ENCODE measurements at regions of chr3 and their contacts with region 1.

Region 1: GRCh38 chr3:49093853-49094767 is at the start of gene QRICH1:
- DNase-seq: peak; percentile 97
- H3K4me3 ChIP-seq: peak within 1 kb of the TSS; percentile 99
- H3K27ac ChIP-seq: peak within 1 kb of the TSS; percentile 98
- H3K27me3 ChIP-seq: no peaks in the 10 kb centered on the region
- CTCF ChIP-seq: peak; percentile 72
- polyA plus RNA-seq, gene QRICH1: 68.6 and 69.7 TPM in 2 replicates

Region 2: GRCh38 chr3:49007068-49007770 is 86.9 kb before region 1 on chr3 and contains the start of gene WDR6:
- CTCF ChIA-PET with region 1: interaction called, 6 read pairs
- POLR2A ChIA-PET with region 1: interaction called, 26 read pairs
- DNase-seq: peak; percentile 96
- H3K4me3 ChIP-seq: peak within 1 kb of the TSS; percentile 93
- H3K27ac ChIP-seq: peak within 1 kb of the TSS; percentile 98
- H3K27me3 ChIP-seq: no peaks in the 10 kb centered on the region
- CTCF ChIP-seq: peak; percentile 35; the same call in 1 of the 2 replicates
- polyA plus RNA-seq, gene WDR6: 101 and 117 TPM in 2 replicates

Region 3: GRCh38 chr3:49028673-49029562 is 65.2 kb before region 1 on chr3 and contains the start of gene IMPDH2:
- CTCF ChIA-PET with region 1: interaction called, 4 read pairs
- POLR2A ChIA-PET with region 1: interaction called, 36 read pairs
- DNase-seq: peak; percentile 81
- H3K4me3 ChIP-seq: peak within 1 kb of the TSS; percentile 87
- H3K27ac ChIP-seq: peak within 1 kb of the TSS; percentile 68
- H3K27me3 ChIP-seq: no peaks in the 10 kb centered on the region
- CTCF ChIP-seq: no peak
- polyA plus RNA-seq, gene IMPDH2: 268 and 284 TPM in 2 replicates

Region 4: GRCh38 chr3:49104483-49105291 is 10.6 kb after region 1 on chr3 and contains the start of gene QARS1:
- CTCF ChIA-PET with region 1: interaction called, 4 read pairs
- POLR2A ChIA-PET with region 1: interaction called, 20 read pairs
- DNase-seq: peak; percentile 73
- H3K4me3 ChIP-seq: peak within 1 kb of the TSS; percentile 87
- H3K27ac ChIP-seq: peak within 1 kb of the TSS; percentile 90
- H3K27me3 ChIP-seq: no peaks in the 10 kb centered on the region
- CTCF ChIP-seq: no peak
- polyA plus RNA-seq, gene QARS1: 209 and 305 TPM in 2 replicates

Region 5: GRCh38 chr3:49120438-49121131 is 26.5 kb after region 1 on chr3 and contains the start of gene USP19:
- CTCF ChIA-PET with region 1: no interaction called
- POLR2A ChIA-PET with region 1: interaction called, 19 read pairs
- DNase-seq: peak; percentile 80
- H3K4me3 ChIP-seq: peak within 1 kb of the TSS; percentile 96
- H3K27ac ChIP-seq: peak within 1 kb of the TSS; percentile 91
- H3K27me3 ChIP-seq: no peaks in the 10 kb centered on the region
- CTCF ChIP-seq: no peak
- polyA plus RNA-seq, gene USP19: 33.3 and 37.7 TPM in 2 replicates

Region 6: DNA sequence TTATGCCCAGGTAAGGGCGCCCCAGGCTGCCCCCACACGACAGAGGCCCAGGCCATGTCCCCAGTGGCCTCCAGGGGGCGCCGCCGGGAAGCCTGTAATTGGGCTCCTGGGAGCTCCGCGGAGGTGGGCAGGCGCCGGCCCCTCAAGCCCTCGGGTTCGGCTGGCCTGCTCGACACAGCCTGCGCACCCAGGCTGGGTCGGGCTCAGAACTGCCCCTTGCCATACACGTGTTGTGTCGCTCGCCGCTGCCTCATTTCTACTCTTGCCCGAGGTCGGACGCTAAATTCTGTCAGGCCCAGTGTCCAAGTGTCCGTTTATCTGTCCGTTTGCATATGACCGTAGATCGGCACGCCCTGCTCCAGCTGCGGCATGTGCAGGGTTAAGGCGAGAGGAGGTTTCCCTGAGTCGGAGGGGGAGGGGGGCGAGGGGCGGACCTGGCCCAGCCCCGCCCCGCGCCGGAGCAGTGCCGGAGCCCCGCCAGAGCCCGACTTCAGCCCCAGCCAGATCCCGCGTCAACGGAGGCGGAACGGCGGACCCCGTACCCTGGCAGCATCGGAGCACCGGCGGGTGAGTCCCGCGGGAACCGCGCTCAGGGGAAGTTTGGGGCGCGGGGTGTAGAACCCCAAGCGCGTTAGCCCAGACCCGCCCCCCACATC is 77.1 kb after region 1 on chr3 and contains the start of gene KLHDC8B:
- CTCF ChIA-PET with region 1: interaction called, 3 read pairs
- POLR2A ChIA-PET with region 1: interaction called, 14 read pairs
- DNase-seq: peak; percentile 57
- H3K4me3 ChIP-seq: peak within 1 kb of the TSS; percentile 83
- H3K27ac ChIP-seq: peak within 1 kb of the TSS; percentile 70
- H3K27me3 ChIP-seq: no peaks in the 10 kb centered on the region
- CTCF ChIP-seq: peak; percentile 91
- polyA plus RNA-seq, gene KLHDC8B: 20.7 and 21.2 TPM in 2 replicates

Region 7: GRCh38 chr3:49629866-49630265 is 535.8 kb after region 1 on chr3:
- CTCF ChIA-PET with region 1: no interaction called
- POLR2A ChIA-PET with region 1: no interaction called
- DNase-seq: no peak
- H3K4me3 ChIP-seq: no peak overlapping the region
- H3K27ac ChIP-seq: no peak overlapping the region
- H3K27me3 ChIP-seq: peaks cover 29% of the 10 kb centered on the region
- CTCF ChIP-seq: no peak